Mammary epithelial cell (primary cell): ENCODE measurements at regions of chr18 and their contacts with region 1.

Region 1: DNA sequence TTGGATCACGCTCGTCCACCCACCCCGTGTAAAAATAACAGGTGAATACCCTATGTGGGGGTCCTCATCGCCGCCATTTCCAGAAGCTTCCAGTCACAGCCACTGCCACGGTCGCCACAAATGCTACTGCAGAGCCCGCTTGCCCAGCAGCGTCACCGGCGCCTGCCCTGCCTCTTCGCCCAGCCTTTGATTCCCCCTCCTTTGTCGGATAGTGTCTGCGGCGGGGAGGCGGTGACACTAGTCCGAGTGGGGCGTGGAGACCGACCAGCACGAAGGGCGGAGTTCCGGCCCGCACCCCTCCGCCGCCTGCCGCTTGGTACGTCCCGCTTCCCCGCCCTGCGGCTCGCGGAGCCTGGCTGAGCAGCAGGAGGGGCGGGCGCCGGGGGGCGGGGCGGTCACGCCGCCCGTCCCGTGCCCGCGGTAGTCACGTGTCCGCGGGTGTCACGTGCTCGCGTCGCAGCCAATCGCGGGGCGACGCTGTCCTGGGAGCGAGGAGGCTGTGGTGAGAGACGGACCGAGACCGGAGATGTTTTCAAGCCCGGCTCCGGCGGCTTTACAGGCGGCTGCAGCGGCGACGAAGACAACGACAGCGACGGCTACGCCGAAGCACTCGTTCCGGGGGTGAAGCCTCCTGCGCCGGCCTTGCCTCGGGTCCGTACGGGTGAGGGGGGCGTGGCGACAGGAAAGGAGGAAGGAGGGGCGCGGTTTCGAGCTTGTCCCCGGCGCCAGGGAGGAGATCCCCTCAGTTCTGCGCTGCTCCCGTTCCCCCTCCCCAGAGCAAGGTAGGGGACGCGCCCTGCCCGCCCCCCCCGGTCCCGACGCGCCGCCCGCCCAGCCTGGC is at the start of gene ANKRD12:
- DNase-seq: peak; percentile 97
- H3K4me3 ChIP-seq: peak within 1 kb of the TSS; percentile 88 to 99 (median 92)
- H3K27ac ChIP-seq: peak within 1 kb of the TSS; percentile 92
- H3K4me1 ChIP-seq: peaks cover 19% of the 10 kb centered on the region
- H3K27me3 ChIP-seq: no peaks in the 10 kb centered on the region
- CTCF ChIP-seq: no peak
- total RNA-seq, gene ANKRD12: 19.8 to 26.0 TPM

Region 2: DNA sequence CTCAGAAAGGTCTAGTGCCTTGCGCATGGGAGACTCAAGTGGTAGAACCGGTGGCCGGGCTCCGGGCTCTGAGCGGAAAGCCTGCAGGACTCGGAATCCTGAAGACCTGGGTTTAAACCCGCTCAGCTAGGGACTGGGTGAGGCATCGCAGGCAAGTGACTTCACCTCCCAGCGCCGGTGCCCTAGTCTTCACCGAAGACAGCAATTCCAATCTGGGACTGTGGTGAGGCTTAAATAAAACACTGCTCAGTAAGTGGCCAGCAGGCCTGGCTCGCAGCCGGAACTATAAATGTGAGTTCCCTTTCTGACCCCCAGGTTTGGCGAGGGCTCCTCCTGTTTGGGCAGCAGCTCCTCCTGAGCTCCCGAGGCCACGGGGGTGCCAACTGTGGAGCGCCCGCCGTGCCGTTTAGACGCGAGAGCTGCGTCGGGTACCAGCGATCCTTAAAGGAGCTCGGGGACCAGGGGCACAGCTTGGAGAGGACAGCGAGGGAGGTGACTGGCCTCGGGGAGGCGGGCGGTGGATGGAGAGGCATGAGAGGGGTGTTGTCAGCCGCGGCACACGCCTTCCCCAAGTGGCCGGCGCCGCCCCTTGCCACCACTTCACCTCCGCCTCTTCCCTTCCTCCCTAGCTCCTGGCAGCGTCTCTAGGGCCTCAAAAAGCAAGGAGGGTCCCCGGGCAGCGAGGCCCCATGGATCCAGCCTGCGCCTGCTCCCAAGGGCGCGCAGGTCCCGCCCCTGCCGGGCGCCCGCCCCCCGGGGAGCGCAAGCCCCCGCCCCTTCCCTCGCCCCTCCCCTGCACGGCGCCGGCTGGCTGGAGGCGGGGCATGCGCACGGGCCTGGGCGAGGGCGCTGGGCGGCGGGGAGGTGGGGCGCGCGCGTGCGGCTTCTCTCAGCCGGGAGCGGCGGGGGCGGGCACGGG is 431.9 kb before region 1 on chr18:
- CTCF ChIA-PET with region 1: no interaction called
- dilution Hi-C with region 1: no loop called
- in situ Hi-C with region 1: no loop called
- intact Hi-C with region 1: loop called (anchors 5 kb)
- DNase-seq: peak; percentile 85
- H3K4me3 ChIP-seq: peak overlapping the region; percentile 47 to 80 (median 65)
- H3K27ac ChIP-seq: peak overlapping the region; percentile 47
- H3K4me1 ChIP-seq: peaks cover 15% of the 10 kb centered on the region
- H3K27me3 ChIP-seq: no peaks in the 10 kb centered on the region
- CTCF ChIP-seq: no peak

Region 3: DNA sequence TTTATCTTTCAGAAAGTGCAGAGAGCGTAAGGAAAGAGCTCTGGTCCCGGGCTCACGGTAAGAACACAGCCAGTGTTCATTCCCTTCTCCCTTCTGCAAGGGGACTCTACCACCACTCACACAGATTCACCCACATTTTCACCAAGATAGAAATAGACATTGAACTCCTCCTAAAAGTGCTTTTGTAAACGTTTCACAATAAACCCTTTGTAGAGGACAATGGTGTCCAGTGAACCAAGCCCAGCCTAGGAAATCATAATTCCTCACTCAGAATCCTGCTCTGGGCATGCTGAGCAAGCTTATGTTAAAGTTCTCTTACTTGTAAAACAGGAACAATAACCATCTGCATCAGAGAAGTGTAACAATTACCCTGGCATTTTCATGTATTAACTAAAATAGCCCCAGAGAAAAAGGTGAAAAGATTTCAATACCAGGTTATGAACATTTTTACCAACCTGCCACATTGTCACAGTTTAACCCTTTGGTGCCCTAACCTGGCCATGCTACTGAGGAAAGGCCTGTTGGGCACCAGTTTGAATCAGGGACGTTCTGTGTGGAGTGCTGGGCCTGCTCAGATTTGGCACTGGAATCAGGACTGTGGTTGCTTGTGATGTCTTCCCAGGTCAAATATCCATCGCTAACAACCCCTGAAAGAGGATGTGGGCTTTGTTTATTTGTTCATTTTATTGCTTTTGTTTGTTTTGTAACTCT is 56.6 kb before region 1 on chr18:
- CTCF ChIA-PET with region 1: no interaction called
- dilution Hi-C with region 1: no loop called
- in situ Hi-C with region 1: loop called in 1 of 2 experiments (anchors 10 kb)
- intact Hi-C with region 1: no loop called
- DNase-seq: no peak
- H3K4me3 ChIP-seq: no peak overlapping the region
- H3K27ac ChIP-seq: no peak overlapping the region
- H3K4me1 ChIP-seq: no peaks in the 10 kb centered on the region
- H3K27me3 ChIP-seq: no peaks in the 10 kb centered on the region
- CTCF ChIP-seq: no peak

Region 4: GRCh38 chr18:9102508-9103375 is 33.8 kb before region 1 on chr18 and contains the start of gene NDUFV2:
- CTCF ChIA-PET with region 1: no interaction called
- dilution Hi-C with region 1: no loop called
- in situ Hi-C with region 1: no loop called
- intact Hi-C with region 1: loop called (anchors 1 kb)
- DNase-seq: peak; percentile 96
- H3K4me3 ChIP-seq: peak within 1 kb of the TSS; percentile 74 to 92 (median 87)
- H3K27ac ChIP-seq: peak within 1 kb of the TSS; percentile 89
- H3K4me1 ChIP-seq: peaks cover 26% of the 10 kb centered on the region
- H3K27me3 ChIP-seq: no peaks in the 10 kb centered on the region
- CTCF ChIP-seq: no peak
- total RNA-seq, gene NDUFV2: 69.2 to 142 TPM

Region 5: DNA sequence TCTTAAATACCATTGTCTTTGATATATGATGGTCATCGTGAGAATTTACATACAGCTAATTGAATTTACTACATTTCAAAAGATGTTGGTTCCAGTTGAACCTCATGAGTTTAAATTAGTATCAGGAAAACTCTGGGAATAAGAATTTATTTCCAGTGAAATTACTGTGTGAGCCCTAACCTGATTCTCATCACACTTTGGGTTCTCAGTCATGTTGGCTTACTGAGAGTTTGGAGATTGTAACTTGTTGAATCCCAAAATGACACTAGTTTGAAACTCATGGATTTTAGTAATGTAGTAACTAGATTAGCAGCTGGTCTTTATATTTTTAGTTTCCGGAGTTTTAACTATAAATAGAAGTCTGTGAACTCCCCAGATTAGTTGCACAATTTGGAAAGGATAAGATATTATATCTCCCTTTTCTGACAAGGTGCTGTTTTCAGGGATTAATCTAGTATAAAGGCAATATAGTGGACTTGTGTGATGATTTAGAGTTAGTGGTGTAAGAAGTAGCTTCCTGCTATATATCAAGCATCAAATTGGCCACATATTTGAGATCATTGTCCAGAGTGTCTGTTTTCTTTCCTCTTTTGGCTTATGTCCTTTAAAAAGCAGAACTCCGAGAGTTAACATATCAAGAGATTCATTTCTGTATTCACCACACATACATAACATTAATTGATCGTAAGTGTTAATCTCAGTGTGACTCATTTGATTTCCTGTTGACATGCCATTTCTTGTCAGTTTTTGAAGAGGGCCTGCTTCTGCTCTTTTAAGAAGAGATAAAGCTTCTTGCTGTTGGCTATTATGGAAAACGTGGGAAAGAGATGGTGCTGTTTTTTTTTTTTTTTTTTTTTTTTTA is 18.3 kb before region 1 on chr18:
- CTCF ChIA-PET with region 1: no interaction called
- dilution Hi-C with region 1: no loop called
- in situ Hi-C with region 1: no loop called
- intact Hi-C with region 1: loop called (anchors 1 kb)
- DNase-seq: peak; percentile 52
- H3K4me3 ChIP-seq: peak overlapping the region in 1 of 3 experiments; percentile 31
- H3K27ac ChIP-seq: peak overlapping the region; percentile 70
- H3K4me1 ChIP-seq: peaks cover 30% of the 10 kb centered on the region
- H3K27me3 ChIP-seq: no peaks in the 10 kb centered on the region
- CTCF ChIP-seq: no peak

Region 6: GRCh38 chr18:9334329-9334972 is 197.9 kb after region 1 on chr18 and contains the start of gene TWSG1:
- CTCF ChIA-PET with region 1: no interaction called
- dilution Hi-C with region 1: no loop called
- in situ Hi-C with region 1: no loop called
- intact Hi-C with region 1: loop called (anchors 1 kb)
- DNase-seq: peak; percentile 91
- H3K4me3 ChIP-seq: peak within 1 kb of the TSS; percentile 64 to 76 (median 65)
- H3K27ac ChIP-seq: peak within 1 kb of the TSS; percentile 63
- H3K4me1 ChIP-seq: peaks cover 10% of the 10 kb centered on the region
- H3K27me3 ChIP-seq: no peaks in the 10 kb centered on the region
- CTCF ChIP-seq: peak in 1 of 2 donors; percentile 55
- total RNA-seq, gene TWSG1: 41.0 to 63.8 TPM

Region 7: DNA sequence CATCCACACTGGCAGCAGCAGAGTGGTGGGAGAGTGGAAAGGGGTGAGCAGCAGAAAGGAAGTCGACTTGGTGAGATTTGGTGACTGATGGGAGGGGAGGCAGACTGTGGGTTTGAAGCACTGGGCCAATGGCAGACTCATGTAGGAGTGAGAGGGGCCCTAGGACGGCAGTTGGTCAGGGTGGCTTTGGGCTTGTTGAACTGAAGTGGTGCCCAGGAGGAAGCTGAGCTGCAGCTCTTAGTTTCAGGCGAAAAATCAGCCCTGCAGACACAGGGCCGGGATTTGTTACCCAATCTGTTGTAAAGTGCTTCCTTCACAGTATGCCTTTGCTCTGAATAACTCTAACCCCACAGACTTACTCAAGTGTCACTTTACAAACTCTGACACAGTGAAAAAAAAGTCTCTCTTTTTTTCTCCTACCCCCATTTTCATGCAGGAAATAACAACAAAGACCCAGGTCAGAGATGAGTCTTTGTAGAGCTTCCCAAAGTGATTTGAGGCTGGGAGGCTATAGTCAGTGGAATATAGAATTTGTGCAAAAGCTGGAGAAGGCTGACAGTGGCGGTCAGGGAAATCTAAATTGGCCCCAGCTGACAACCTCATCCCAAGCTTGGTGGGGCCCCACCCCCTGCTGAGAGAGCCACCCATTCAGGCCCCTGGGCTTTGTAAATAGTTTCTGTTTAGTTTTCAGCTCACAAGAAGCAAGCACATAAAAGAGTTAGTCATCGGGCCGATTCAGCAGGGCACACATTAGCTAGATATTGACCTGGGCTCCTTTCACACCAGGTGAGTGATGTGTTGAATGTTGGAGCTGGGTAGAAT is 1004.1 kb after region 1 on chr18:
- CTCF ChIA-PET with region 1: no interaction called
- dilution Hi-C with region 1: no loop called
- in situ Hi-C with region 1: no loop called
- intact Hi-C with region 1: no loop called
- DNase-seq: peak; percentile 23
- H3K4me3 ChIP-seq: no peak overlapping the region
- H3K27ac ChIP-seq: no peak overlapping the region
- H3K4me1 ChIP-seq: no peaks in the 10 kb centered on the region
- H3K27me3 ChIP-seq: no peaks in the 10 kb centered on the region
- CTCF ChIP-seq: no peak